SK-N-SH (cell line): ENCODE measurements at regions of chr12 and their contacts with region 1.

Region 1: GRCh38 chr12:47963340-47964040 is at the start of gene TMEM106C:
- DNase-seq: peak; percentile 99
- H3K4me3 ChIP-seq: peak within 1 kb of the TSS; percentile 94 to 97
- H3K27ac ChIP-seq: peak within 1 kb of the TSS in 1 of 2 experiments; percentile 77; a peak in 1 of 4 replicates
- H3K4me1 ChIP-seq: peaks cover 0 to 6% of the 10 kb centered on the region in 2 experiments; a peak in 1 of 4 replicates
- H3K27me3 ChIP-seq: no peaks in the 10 kb centered on the region
- CTCF ChIP-seq: peak; percentile 92
- EP300 ChIP-seq: no peak
- RAD21 ChIP-seq: peak; percentile 71
- polyA plus RNA-seq, gene TMEM106C: 133 and 173 TPM in 2 replicates

Region 2: DNA sequence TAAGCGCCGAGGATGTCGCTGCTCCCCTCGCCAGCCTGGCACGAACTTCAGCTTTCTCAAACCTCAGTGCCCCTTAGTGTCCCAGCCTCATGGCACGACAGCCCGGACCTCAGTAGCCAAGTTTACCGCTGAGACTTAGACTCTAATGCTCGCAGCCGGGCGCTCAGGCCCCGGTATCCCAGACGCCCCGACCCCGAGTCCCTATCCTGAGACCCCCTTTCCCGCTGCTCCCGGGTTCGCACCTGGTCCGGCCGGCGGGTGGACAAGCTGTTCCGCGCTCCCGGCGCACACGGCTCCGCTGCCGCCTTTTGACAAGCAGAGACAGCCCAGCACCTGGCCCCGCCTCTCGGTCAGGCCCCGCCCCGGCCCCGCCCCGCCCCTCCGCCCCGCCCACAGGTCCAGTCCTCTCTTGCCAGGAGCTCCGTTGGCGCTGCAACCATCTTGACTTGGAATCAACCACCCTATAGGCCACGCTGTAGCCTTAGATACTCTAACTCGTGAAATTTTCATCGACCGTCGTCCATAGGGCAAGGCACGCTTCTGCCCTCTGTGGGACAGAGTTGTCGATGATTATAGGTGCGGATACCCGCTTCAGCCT is 58.7 kb before region 1 on chr12 and contains the start of gene VDR:
- CTCF ChIA-PET with region 1: interaction called, 29 read pairs
- POLR2A ChIA-PET with region 1: no interaction called
- DNase-seq: peak; percentile 93
- H3K4me3 ChIP-seq: peak within 1 kb of the TSS; percentile 51 to 73
- H3K27ac ChIP-seq: no peak within 1 kb of the TSS; a peak in 1 of 4 replicates
- H3K4me1 ChIP-seq: peaks cover 7 to 18% of the 10 kb centered on the region in 2 experiments; a peak in 2 of 4 replicates
- H3K27me3 ChIP-seq: peaks cover 11% of the 10 kb centered on the region
- CTCF ChIP-seq: no peak; the same call in 1 of the 2 replicates
- EP300 ChIP-seq: no peak
- RAD21 ChIP-seq: peak; percentile 21; the same call in 1 of the 2 replicates
- polyA plus RNA-seq, gene VDR: 0.29 and 0.33 TPM in 2 replicates

Region 3: DNA sequence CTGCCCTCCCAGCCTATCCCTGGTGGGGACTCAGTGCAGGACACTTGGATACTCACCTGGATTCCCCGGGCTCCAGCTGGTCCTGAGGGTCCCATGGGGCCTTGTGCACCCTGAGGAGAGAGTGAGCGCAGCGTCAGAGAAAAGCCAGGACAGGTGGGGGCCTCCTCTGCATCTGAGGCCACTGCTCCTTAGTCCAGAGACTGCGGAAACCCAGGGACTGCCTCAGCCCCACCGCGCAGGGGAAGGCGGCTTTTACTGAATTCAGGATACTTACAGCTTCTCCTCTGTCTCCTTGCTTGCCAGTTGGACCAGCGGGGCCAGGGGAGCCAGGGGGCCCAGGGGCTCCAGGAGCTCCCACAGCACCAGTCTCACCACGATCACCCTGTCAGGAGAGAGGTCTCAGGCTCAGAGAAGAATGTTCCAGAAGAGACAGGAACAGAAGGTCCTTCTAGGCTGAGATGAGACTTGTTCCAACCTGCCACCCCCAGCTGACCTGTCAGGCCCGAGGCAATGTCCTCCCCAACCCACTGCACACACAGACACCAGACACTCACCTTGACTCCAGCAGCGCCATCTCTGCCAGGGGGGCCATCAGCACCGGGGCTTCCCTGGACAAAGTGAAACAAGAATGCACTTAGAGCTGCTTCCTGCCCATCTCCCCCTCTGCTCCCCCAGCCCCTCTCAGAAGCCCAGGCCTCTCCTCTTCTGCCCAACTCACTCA is 13.7 kb after region 1 on chr12:
- CTCF ChIA-PET with region 1: interaction called, 10 read pairs
- POLR2A ChIA-PET with region 1: interaction called, 3 read pairs
- DNase-seq: no peak
- H3K4me3 ChIP-seq: no peak overlapping the region
- H3K27ac ChIP-seq: no peak overlapping the region
- H3K4me1 ChIP-seq: peaks cover 0 to 10% of the 10 kb centered on the region in 2 experiments; a peak in 1 of 4 replicates
- H3K27me3 ChIP-seq: no peaks in the 10 kb centered on the region
- CTCF ChIP-seq: no peak
- EP300 ChIP-seq: no peak
- RAD21 ChIP-seq: no peak

Region 4: GRCh38 chr12:47990351-47991105 is 27.0 kb after region 1 on chr12:
- CTCF ChIA-PET with region 1: interaction called, 11 read pairs
- POLR2A ChIA-PET with region 1: no interaction called
- DNase-seq: no peak
- H3K4me3 ChIP-seq: no peak overlapping the region
- H3K27ac ChIP-seq: peak overlapping the region in 1 of 2 experiments; percentile 97; a peak in 2 of 4 replicates
- H3K4me1 ChIP-seq: peaks cover 0 to 43% of the 10 kb centered on the region in 2 experiments; a peak in 2 of 4 replicates
- H3K27me3 ChIP-seq: peaks cover 18% of the 10 kb centered on the region
- CTCF ChIP-seq: no peak
- EP300 ChIP-seq: no peak
- RAD21 ChIP-seq: no peak

Region 5: GRCh38 chr12:49331380-49332222 is 1368.1 kb after region 1 on chr12:
- CTCF ChIA-PET with region 1: no interaction called
- POLR2A ChIA-PET with region 1: no interaction called
- DNase-seq: peak; percentile 81
- H3K4me3 ChIP-seq: peak overlapping the region in 1 of 2 experiments; percentile 25; a peak in 1 of 4 replicates
- H3K27ac ChIP-seq: no peak overlapping the region
- H3K4me1 ChIP-seq: peaks cover 0 to 2% of the 10 kb centered on the region in 2 experiments; a peak in 1 of 4 replicates
- H3K27me3 ChIP-seq: no peaks in the 10 kb centered on the region
- CTCF ChIP-seq: peak; percentile 84
- EP300 ChIP-seq: no peak
- RAD21 ChIP-seq: peak; percentile 80